Activated CD4-positive, alpha-beta memory T cell treated with anti-CD3 and anti-CD28 coated beads, Interleukin-2, amount 10 ng/mL, durations not matched to agents 7 days and 5 days (primary cell): ENCODE measurements at regions of chr21 and their contacts with region 1.

Region 1: DNA sequence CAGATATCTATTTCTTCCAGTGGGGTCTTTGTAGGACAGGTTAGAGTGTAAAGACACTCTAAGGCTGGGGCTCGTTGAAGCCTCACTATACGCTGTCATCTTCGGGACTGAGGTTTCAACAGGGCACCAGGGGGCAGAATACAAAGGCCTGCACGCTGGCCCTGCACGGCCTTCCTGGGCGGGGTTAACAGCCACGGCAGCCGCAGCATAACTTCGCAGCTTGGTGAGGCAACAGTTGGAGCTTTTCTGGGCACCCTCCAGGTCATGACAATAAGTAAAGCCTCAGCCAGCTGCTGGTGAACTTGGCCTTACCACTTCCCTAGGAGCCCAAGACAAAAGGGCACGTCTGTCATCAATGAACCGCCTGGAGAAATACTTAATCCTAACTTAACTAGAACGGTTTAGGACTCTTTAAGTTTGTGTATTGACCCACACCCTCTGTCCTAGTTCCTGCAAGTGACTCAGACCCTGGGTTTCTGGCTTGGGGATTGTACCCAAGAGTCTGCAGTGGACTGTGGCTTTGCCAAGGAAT is 2.3 kb upstream of the RUNX1 start:
- DNase-seq: peak; percentile 89
- H3K4me3 Mint-ChIP-seq: peak overlapping the region; percentile 24
- H3K27ac Mint-ChIP-seq: peak overlapping the region; percentile 99
- H3K4me1 Mint-ChIP-seq: peaks cover 37% of the 10 kb centered on the region
- H3K27me3 Mint-ChIP-seq: peaks cover 1% of the 10 kb centered on the region

Region 2: DNA sequence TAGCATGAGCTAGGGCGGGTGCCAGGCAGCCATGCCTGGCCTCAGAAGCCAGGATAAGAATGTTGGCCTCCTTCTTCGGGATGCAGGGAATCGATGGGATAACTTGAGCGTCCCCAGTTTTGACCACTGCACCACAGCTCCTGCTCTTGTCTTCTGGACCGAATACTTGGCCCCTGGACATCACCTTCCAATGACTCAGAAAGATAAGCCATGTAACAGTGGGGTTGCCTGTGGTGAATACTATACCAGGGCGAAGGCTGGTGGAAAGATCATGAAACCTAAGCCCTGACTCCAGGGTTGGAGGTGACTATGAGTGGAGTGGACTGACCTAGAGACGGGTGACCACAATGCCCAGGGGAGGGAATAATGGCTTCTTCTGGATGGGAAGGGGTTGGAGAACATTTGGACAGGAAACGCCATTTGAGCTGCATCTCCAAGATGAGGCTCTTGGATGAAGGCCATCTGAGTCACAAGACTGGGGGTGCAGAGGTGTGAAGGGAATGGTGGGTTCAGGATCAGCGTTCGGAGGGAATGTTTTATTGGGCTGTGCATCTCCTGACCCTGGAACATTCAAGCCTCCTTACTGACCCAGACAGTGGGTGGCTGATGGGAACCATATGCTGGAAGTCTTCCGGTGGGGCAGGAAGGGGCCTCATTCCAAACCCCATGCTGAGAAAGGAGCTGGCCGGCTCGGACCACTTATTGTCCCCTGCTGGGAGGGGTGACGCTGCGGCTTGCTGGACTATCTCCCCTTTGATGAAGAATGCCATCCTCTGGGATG is 706.1 kb before region 1 on chr21:
- CTCF ChIA-PET with region 1: no interaction called
- POLR2A ChIA-PET with region 1: no interaction called
- DNase-seq: no peak
- H3K4me3 Mint-ChIP-seq: no peak overlapping the region
- H3K27ac Mint-ChIP-seq: no peak overlapping the region
- H3K4me1 Mint-ChIP-seq: peaks cover 8% of the 10 kb centered on the region
- H3K27me3 Mint-ChIP-seq: peaks cover 10% of the 10 kb centered on the region

Region 3: DNA sequence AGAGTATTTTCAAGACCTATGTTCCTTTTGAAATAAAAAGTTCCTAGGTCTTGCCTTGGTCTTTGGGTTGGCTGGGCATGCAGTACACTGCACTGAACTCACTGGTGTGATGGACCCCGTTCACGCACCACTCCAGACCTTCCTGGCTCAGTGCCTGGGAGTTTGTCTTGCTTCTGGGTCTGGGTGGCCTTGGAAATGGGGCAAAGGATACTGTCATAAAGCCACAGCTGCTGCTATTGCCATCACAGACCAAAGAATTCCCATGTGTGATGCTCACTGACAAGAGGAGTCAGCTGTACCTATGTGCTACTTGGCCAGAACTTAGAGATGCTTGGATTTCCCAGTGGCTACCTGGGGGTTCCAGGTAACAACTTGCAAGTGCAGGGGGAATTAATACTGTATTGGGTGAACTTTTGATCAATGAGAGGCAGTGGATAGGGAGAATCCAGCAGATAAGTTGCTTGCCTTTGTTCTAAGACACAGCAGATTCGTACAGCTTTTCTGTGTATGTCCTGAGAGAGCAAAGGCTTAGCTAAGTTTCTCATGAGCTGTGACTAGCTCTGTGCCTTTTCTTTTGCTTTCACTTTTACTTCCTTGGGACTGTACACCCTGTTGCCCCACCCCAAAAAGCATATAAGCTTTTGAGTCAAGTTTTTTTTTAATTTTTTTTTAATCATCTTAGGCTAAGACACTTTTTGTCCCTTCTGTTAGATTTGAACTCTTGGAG is 117.6 kb before region 1 on chr21:
- CTCF ChIA-PET with region 1: interaction called, 20 read pairs
- POLR2A ChIA-PET with region 1: interaction called, 84 read pairs
- DNase-seq: no peak
- H3K4me3 Mint-ChIP-seq: peak overlapping the region; percentile 63
- H3K27ac Mint-ChIP-seq: peak overlapping the region; percentile 95
- H3K4me1 Mint-ChIP-seq: peaks cover 79% of the 10 kb centered on the region
- H3K27me3 Mint-ChIP-seq: no peaks in the 10 kb centered on the region

Region 4: GRCh38 chr21:34967509-34968289 is 83.7 kb before region 1 on chr21:
- CTCF ChIA-PET with region 1: interaction called, 5 read pairs
- POLR2A ChIA-PET with region 1: interaction called, 57 read pairs
- DNase-seq: peak; percentile 55
- H3K4me3 Mint-ChIP-seq: peak overlapping the region; percentile 51
- H3K27ac Mint-ChIP-seq: peak overlapping the region; percentile 94
- H3K4me1 Mint-ChIP-seq: peaks cover 89% of the 10 kb centered on the region
- H3K27me3 Mint-ChIP-seq: peaks cover 4% of the 10 kb centered on the region

Region 5: DNA sequence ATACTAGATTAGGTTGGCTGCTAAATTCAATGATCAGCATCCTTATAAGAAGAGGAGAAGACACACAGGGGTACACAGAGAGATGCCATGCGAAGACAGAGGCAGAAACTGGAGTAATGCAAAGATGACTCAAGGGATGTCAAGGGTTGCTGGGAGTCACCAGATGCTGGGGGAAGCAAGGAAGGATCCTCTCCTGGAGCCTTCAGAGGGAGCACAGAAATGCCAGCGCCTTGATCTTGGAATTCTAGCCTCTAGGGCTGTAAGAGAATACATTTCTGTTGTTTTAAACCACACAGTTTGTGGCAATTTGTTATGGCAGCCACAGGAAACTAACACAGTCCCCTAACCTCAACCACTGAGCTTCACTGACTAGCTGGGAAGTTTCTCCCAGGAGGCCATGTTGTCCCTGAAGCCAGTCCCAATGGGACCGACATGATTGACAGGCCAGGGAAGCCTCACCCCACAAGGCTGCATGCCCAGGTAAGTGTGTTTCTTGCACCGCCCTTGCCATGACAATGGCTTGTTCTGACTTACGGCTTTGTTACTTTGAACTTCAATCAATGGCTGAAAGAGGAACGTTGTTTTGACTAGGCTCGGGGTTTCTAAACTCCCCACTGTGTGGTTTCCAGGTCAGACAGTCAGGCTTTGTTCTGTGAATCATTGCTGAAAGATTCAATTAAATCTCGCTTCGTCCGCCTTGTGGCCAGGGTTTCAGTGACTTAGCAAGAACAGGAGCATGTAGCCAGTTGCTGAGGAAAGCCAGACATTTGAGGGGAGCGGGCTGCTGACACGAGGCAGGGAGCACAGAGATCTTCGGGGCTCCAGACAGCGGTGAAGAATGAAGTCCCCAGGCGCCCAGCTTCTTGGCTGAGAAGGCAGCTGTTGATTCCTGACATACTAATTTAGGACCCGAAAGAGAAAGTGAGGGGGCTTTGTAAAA is 64.5 kb before region 1 on chr21:
- CTCF ChIA-PET with region 1: interaction called, 13 read pairs
- POLR2A ChIA-PET with region 1: interaction called, 382 read pairs
- DNase-seq: peak; percentile 82
- H3K4me3 Mint-ChIP-seq: peak overlapping the region; percentile 61
- H3K27ac Mint-ChIP-seq: peak overlapping the region; percentile 77
- H3K4me1 Mint-ChIP-seq: peaks cover 94% of the 10 kb centered on the region
- H3K27me3 Mint-ChIP-seq: no peaks in the 10 kb centered on the region

Region 6: DNA sequence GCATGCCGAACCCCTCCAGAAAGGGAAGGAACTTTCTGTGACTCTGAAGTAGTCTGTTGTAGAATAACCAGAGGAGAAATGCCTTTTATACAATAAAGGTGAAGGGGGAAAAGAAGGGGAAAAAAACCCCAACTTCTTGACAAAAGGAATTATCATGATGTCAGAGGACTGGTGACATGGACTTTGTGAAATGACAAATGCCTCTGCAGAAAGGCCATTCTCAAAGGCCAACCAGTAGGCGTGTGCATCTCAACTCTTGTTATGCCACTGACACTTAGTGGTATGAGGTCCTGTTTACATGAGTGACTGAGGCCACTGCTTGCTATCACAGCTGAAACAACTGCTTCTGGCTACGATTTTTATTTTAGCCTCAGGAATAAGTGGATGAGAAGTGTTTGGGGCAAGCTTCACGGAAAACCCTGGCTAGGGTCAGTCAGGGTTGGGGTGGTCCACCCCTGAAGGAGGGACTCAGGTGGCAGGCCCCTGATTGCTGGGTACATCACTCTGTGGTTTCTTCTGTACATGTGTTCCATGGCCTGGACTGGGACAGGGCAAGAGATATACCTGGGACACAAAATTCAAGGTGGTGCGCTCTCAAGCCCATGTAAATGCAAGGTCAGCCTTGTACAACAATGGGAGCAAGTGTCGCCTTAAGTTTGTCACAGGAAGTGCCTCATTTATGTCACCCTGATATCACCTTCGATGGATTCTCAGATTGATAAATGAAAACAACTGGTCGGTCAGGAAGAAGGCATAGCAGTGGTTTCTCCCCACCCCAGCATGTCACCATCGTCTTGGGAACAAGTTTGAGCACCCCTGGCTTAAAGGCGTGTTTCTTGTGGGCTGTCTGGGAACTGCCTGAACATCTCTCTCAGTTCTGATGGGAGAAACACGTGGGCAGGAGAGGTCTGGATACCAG is 14.6 kb before region 1 on chr21:
- CTCF ChIA-PET with region 1: interaction called, 4 read pairs
- POLR2A ChIA-PET with region 1: interaction called, 152 read pairs
- DNase-seq: no peak
- H3K4me3 Mint-ChIP-seq: peak overlapping the region; percentile 68
- H3K27ac Mint-ChIP-seq: peak overlapping the region; percentile 92
- H3K4me1 Mint-ChIP-seq: peaks cover 95% of the 10 kb centered on the region
- H3K27me3 Mint-ChIP-seq: no peaks in the 10 kb centered on the region

Region 7: GRCh38 chr21:35120631-35121186 is 69.4 kb after region 1 on chr21:
- CTCF ChIA-PET with region 1: no interaction called
- POLR2A ChIA-PET with region 1: no interaction called
- DNase-seq: no peak
- H3K4me3 Mint-ChIP-seq: no peak overlapping the region
- H3K27ac Mint-ChIP-seq: no peak overlapping the region
- H3K4me1 Mint-ChIP-seq: no peaks in the 10 kb centered on the region
- H3K27me3 Mint-ChIP-seq: peaks cover 8% of the 10 kb centered on the region

Region 8: GRCh38 chr21:35400233-35400957 is 349.0 kb after region 1 on chr21:
- CTCF ChIA-PET with region 1: interaction called, 31 read pairs
- POLR2A ChIA-PET with region 1: no interaction called
- DNase-seq: peak; percentile 27
- H3K4me3 Mint-ChIP-seq: no peak overlapping the region
- H3K27ac Mint-ChIP-seq: no peak overlapping the region
- H3K4me1 Mint-ChIP-seq: peaks cover 14% of the 10 kb centered on the region
- H3K27me3 Mint-ChIP-seq: no peaks in the 10 kb centered on the region